ENCODE measurements at regions of chr1 and their contacts with region 1.

Region 1: DNA sequence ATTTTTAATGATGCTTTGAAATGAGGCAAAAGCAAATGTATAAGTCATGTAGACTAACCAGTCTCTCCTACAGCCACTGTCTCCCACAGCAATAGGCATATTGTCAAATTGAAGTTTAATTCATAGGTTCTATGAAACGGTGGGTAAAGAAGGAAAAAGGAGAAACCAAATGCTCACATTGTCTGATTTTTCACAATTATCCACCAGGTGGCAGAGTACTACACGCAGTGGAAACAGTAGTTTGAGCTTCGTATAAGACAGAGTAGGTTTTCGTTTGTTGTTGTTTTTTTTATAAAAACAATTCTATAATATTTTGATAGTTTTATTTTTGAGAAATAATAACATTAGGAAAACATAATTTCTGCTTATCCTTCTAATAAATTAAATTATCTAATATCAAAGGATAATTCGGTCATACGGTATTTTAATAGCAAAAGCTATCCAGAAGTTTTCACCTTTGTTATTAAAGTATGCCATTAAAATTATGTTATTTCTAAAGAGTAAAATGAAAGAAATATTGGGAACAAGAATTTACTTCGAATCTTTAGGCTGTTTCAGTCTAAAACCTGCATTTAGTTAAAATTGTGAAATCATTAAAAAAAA is 39.1 kb downstream of the TYW3 start:
- DNase-seq: no peak
- ATAC-seq: no peak

Region 2: GRCh38 chr1:75203415-75204277 is 431.6 kb after region 1 on chr1:
- intact Hi-C with region 1: loop called (anchors 1 to 10 kb)
- DNase-seq: no peak
- ATAC-seq: peak; percentile 57 to 59

Measured in left cardiac atrium (tissue), 4 donors.